CD8-positive, alpha-beta T cell (primary cell): ENCODE measurements at regions of chr4 and their contacts with region 1.

Region 1: DNA sequence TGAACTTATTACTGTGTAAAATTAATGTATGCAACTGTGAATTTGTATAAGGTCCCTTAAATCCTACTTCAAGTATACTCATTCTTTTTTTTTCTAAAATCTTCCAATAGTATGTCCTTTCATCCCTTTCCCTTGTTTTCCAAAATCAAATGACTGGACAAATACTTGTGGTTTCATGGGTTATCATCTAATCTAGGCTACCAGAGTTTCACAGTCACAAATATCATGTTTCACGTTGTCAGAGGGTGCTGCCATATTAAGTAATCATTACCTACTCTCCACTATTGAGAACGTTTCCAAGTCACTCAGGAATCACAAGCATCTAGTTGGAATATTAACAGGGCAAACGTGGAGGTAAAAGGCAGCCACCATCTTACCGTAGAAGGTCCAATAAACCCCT is 1235.0 kb upstream of the TENM3 start:
- DNase-seq: no peak
- ATAC-seq: no peak
- H3K4me3 ChIP-seq: no peak overlapping the region
- H3K4me3 Mint-ChIP-seq: no peak overlapping the region
- H3K27ac ChIP-seq: no peak overlapping the region
- H3K27ac Mint-ChIP-seq: no peak overlapping the region
- H3K4me1 ChIP-seq: no peaks in the 10 kb centered on the region
- H3K4me1 Mint-ChIP-seq: no peaks in the 10 kb centered on the region
- H3K27me3 ChIP-seq: no peaks in the 10 kb centered on the region
- H3K27me3 Mint-ChIP-seq: no peaks in the 10 kb centered on the region
- CTCF ChIP-seq: no peak

Region 2: GRCh38 chr4:181020456-181020855 is 12.3 kb after region 1 on chr4:
- CTCF ChIA-PET with region 1: no interaction called
- POLR2A ChIA-PET with region 1: no interaction called
- intact Hi-C with region 1: loop called in 1 of 2 experiments (anchors 1 kb)
- DNase-seq: no peak
- ATAC-seq: no peak
- H3K4me3 ChIP-seq: no peak overlapping the region
- H3K4me3 Mint-ChIP-seq: no peak overlapping the region
- H3K27ac ChIP-seq: no peak overlapping the region
- H3K27ac Mint-ChIP-seq: no peak overlapping the region
- H3K4me1 ChIP-seq: no peaks in the 10 kb centered on the region
- H3K4me1 Mint-ChIP-seq: no peaks in the 10 kb centered on the region
- H3K27me3 ChIP-seq: no peaks in the 10 kb centered on the region
- H3K27me3 Mint-ChIP-seq: no peaks in the 10 kb centered on the region
- CTCF ChIP-seq: no peak